RWPE1 (cell line): ENCODE measurements at regions of chr21 and their contacts with region 1.

Region 1: DNA sequence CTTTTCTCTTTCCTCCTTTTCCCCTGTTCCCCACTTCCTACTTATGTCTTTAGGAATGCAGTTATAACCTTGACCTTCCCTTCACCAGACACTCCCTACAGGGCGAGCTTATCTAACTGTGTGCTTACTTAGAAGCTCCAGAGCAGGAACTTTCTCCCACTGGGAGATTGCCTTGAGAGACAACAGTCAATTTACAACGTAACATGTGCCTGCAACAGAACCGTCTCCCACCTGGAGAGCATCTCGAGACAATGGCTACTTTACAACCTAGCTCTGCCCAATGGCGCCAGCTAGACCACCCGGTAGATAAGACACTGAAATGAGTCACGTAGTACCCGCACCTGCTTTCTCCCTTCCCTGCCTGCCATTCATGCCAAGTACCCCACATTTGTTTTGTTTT is 16.7 kb downstream of the HMGN1 start:
- DNase-seq: no peak
- H3K27ac ChIP-seq: no peak overlapping the region
- CTCF ChIP-seq: no peak

Region 2: DNA sequence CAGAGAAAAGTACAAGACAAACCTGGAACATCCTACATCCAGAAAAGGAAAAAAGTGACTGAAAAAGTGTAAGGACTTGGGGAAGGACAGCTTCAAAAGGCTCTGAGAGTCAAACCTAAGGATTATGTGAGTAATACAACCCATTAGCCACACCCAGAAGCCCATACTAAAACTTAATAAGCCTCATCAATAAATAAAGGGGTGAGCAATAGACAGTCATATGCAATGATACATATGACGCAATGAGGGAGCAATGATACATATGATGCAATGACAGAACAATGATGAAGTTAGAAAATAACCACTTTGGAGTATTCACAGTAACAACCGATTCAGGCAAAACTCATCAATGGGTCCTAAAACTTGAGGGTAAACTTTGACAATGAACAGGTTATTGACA is 68.8 kb before region 1 on chr21:
- CTCF ChIA-PET with region 1: no interaction called
- POLR2A ChIA-PET with region 1: no interaction called
- DNase-seq: peak; percentile 28
- H3K27ac ChIP-seq: no peak overlapping the region
- CTCF ChIP-seq: no peak

Region 3: DNA sequence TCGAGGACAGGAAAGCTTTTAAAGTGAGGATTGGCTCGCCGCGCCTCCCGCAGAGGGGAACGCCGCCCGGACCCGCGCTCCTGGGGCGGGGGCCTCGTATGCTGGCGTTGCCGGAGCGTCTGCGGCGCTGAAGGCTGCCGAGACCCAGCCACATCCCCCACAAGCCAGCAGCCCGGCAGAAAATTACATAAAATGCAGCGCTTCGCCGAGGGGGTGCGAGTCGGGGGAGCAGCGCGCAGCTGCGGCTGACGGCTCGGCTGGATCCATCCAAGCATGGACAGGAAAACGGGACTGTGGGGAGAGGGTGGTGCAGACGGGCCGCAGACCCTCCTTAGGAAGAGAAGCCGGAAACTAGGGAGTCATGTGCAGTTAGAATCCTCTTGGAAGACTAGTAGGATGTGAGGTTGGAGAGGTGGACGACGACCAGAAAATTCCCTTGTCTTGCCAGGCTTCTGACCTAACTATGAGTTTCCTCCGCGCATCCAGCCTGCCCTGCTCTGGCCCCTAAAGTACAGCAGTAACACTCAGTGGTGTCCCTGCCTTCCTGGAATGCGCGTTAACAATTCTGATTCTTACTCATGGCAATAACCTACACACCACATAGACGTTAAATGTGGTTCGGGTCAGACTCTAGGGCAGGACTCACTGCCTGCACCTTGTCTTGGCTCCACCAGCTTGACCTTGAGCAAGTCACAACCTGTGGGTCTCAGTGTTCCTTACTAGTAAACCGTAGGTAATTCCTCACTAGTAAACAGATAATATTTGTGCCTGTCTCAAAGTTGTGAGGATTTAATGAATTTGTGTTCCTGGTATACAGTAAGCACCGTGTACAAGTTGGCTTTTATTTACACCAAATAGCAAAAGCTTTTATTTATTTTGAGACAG is 17.8 kb before region 1 on chr21:
- CTCF ChIA-PET with region 1: no interaction called
- POLR2A ChIA-PET with region 1: interaction called, 15 read pairs
- DNase-seq: peak; percentile 27
- H3K27ac ChIP-seq: peak overlapping the region; percentile 95
- CTCF ChIP-seq: no peak